CD4-positive, alpha-beta memory T cell (primary cell): ENCODE measurements at regions of chr3 and their contacts with region 1.

Region 1: GRCh38 chr3:171703756-171704401 is 106.4 kb downstream of the PLD1 start:
- DNase-seq: peak in 4 of 5 donors; percentile 3 to 7 (median 5)
- H3K4me3 ChIP-seq: no peak overlapping the region
- H3K4me3 Mint-ChIP-seq: no peak overlapping the region
- H3K27ac ChIP-seq: no peak overlapping the region
- H3K27ac Mint-ChIP-seq: no peak overlapping the region
- H3K4me1 ChIP-seq: no peaks in the 10 kb centered on the region
- H3K4me1 Mint-ChIP-seq: no peaks in the 10 kb centered on the region
- H3K27me3 ChIP-seq: no peaks in the 10 kb centered on the region
- H3K27me3 Mint-ChIP-seq: peaks cover 7% of the 10 kb centered on the region in 2 donors

Region 2: GRCh38 chr3:171829841-171830517 is 126.1 kb after region 1 on chr3:
- CTCF ChIA-PET with region 1: interaction called, 7 read pairs
- POLR2A ChIA-PET with region 1: no interaction called
- intact Hi-C with region 1: loop called (anchors 10 kb)
- DNase-seq: no peak
- H3K4me3 ChIP-seq: no peak overlapping the region
- H3K4me3 Mint-ChIP-seq: no peak overlapping the region
- H3K27ac ChIP-seq: no peak overlapping the region
- H3K27ac Mint-ChIP-seq: no peak overlapping the region
- H3K4me1 ChIP-seq: peaks cover 4% of the 10 kb centered on the region
- H3K4me1 Mint-ChIP-seq: peaks cover 9 to 17% (median 11%) of the 10 kb centered on the region in 4 donors
- H3K27me3 ChIP-seq: no peaks in the 10 kb centered on the region
- H3K27me3 Mint-ChIP-seq: peaks cover 3 to 5% of the 10 kb centered on the region in 2 donors